Activated CD4-positive, alpha-beta memory T cell treated with anti-CD3 and anti-CD28 coated beads for 36 hours (primary cell): ENCODE measurements at regions of chr12 and their contacts with region 1.

Region 1: DNA sequence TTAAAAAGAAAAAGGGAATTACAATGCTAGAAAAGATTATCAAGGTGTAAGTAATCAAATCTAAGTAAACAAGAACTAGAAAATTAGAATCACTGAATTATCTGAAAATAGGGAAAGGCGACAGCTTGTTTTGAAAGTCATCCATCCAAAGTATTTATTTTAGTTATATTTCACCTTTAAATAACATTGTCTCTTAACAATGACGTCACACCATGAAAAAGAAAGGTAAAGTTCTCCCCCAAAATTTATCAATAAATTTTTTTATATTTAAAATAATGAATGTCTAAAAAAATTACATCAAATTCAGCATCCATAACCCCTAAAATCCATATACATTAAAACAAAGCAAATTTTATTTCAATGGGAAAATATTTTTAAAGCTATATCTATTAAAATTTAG is 223.2 kb downstream of the RERGL start:
- DNase-seq: no peak
- H3K4me3 Mint-ChIP-seq: no peak overlapping the region
- H3K27ac Mint-ChIP-seq: no peak overlapping the region
- H3K4me1 Mint-ChIP-seq: no peaks in the 10 kb centered on the region
- H3K27me3 Mint-ChIP-seq: no peaks in the 10 kb centered on the region

Region 2: GRCh38 chr12:17778242-17778641 is 88.6 kb before region 1 on chr12:
- CTCF ChIA-PET with region 1: no interaction called
- POLR2A ChIA-PET with region 1: no interaction called
- intact Hi-C with region 1: loop called (anchors 5 kb)
- DNase-seq: no peak
- H3K4me3 Mint-ChIP-seq: no peak overlapping the region
- H3K27ac Mint-ChIP-seq: no peak overlapping the region
- H3K4me1 Mint-ChIP-seq: no peaks in the 10 kb centered on the region
- H3K27me3 Mint-ChIP-seq: no peaks in the 10 kb centered on the region